Mammary epithelial cell (primary cell): ENCODE measurements at regions of chr7 and their contacts with region 1.

Region 1: DNA sequence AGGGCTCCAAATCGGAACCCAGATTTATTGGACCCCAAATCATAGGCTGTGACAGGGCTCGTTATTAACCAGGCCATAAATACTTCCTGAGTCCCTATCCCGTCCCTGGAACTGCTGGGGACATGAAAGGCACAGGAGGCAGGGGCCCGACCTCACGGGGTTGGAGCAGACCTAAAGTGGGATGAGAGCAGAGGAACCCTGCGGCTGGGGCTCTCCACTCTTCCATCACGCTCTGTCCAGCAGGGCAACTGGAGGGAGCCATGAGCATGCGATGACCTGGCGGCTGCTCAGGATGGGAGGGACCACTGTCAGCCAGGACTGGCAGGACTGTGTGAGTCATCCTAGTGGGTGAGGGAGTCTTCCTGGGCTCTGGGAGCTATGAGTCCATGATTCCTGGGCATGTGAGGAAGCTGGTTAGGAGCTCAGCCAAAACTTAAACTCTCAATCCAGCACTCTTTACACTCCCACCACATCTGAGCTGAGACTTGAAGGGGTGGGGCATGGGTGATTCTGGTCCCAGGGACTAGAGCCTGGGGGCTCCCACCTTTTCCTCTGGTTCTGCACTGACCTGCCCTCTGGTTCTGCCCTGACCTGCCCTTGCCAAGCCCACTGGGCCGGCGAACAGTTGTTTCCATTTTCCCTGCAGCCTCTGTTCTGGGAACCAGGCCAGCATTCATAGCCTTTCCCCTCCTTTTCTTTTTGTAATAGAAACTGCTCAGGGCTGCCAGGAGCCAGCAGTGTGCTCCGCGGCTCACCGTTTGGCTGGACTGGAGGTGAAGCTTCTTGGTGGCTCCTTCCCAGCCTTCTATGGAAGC is 47.1 kb downstream of the SYPL1 start:
- DNase-seq: peak; percentile 99
- H3K4me3 ChIP-seq: peak overlapping the region; percentile 15 to 22 (median 18)
- H3K27ac ChIP-seq: peak overlapping the region; percentile 85
- H3K4me1 ChIP-seq: peaks cover 76% of the 10 kb centered on the region
- H3K27me3 ChIP-seq: no peaks in the 10 kb centered on the region
- CTCF ChIP-seq: peak in 1 of 2 donors; percentile 6

Region 2: GRCh38 chr7:106112117-106112971 is 47.4 kb after region 1 on chr7 and contains the start of gene SYPL1:
- CTCF ChIA-PET with region 1: no interaction called
- dilution Hi-C with region 1: no loop called
- in situ Hi-C with region 1: no loop called
- intact Hi-C with region 1: loop called (anchors 1 kb)
- DNase-seq: peak; percentile 90
- H3K4me3 ChIP-seq: peak within 1 kb of the TSS; percentile 87 to 98 (median 90)
- H3K27ac ChIP-seq: peak within 1 kb of the TSS; percentile 94
- H3K4me1 ChIP-seq: peaks cover 18% of the 10 kb centered on the region
- H3K27me3 ChIP-seq: no peaks in the 10 kb centered on the region
- CTCF ChIP-seq: no peak
- total RNA-seq, gene SYPL1: 74.3 to 124 TPM

Region 3: DNA sequence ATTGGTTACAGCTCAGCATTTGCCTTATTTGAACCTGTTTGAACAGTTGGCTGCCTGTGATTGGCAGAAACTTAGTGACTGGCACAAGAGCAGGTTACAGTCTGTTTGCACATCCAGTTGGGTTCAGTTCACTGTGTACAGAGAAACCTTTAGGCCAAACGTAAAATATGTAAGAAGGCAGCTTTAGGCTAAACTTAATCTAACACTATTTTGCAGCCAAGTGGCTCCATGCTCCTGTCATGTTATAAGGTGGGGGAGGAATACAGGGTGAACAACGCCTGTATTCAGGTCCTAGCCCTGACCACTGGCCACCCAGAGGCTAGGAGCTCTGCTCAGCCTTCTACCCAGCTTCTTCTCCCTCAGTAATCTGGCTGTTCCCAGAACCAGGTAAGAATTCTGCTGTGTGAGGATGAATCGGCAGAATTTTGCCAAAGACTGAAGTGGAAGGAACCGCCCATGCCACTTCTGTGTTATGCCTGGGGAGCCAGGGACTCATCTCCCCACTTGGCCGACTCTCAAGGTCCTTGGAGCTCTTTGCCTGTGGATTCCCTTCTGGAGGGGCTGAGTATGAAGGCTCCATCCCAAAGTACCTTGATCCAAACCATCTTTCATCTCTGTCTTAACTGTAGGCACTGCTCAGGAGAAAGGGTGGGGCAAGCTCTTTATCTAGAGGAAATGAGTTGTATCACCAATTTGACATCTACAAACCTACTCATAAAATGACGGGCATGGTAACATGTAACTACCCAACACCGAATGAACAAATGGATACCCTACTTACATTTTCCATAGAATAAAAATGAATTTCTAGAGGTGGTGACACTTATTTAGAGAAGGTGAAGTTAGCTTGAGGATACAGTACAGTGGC is 384.2 kb after region 1 on chr7:
- CTCF ChIA-PET with region 1: no interaction called
- dilution Hi-C with region 1: no loop called
- in situ Hi-C with region 1: no loop called
- intact Hi-C with region 1: no loop called
- DNase-seq: no peak
- H3K4me3 ChIP-seq: no peak overlapping the region
- H3K27ac ChIP-seq: no peak overlapping the region
- H3K4me1 ChIP-seq: peaks cover 15% of the 10 kb centered on the region
- H3K27me3 ChIP-seq: no peaks in the 10 kb centered on the region
- CTCF ChIP-seq: no peak